ENCODE measurements at regions of chr1 and their contacts with region 1.

Region 1: DNA sequence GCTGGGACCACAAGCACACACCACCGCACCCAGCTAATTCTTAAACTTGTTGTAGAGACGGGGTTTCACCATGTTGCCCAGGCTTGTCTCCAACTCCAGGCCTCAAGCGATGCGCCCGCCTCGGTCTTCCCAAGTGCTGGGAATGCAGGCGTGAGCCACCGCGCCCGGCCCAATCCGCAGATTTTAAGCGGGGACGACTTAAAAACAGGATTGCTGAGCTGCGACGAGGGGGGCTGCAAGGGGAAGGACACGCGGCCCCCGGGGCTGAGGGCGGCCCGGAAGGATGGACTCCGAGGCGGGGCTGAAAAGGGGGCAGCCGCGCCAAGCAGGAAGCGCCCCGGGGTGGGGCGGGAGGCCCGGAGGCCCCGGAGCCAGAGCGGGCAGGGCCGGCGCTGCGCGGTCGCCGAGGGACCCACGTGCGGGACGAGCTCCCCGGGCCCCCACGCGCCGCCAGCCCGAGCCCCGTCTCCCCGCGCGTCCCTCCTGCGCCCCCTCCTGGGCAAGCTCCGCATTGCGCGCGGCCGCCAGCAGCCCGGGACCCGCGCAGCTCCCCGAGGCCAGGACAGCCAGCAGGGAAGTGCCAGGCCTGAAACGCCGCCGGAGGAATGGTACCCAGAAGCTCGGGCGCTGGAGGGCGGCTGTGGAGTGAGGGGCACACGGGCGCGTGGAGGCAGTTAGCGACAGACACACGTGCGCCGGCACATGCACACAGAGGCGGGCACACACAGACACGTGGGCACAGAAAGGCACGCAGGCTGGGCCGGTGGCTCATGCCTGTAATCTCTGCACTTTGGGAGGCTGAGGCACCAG is 5.5 kb upstream of the PRKCZ start:
- DNase-seq: peak; percentile 80
- ATAC-seq: peak; percentile 9
- H3K4me3 Mint-ChIP-seq: peak overlapping the region; percentile 27
- H3K27ac Mint-ChIP-seq: no peak overlapping the region
- H3K4me1 Mint-ChIP-seq: peaks cover 23% of the 10 kb centered on the region
- H3K27me3 Mint-ChIP-seq: peaks cover 13% of the 10 kb centered on the region; the same call in 1 of the 2 replicates
- CTCF ChIP-seq: peak; percentile 94

Region 2: GRCh38 chr1:1906185-1907097 is 138.3 kb before region 1 on chr1:
- CTCF ChIA-PET with region 1: interaction called, 53 read pairs
- POLR2A ChIA-PET with region 1: no interaction called
- DNase-seq: peak; percentile 89
- ATAC-seq: peak; percentile 68
- H3K4me3 Mint-ChIP-seq: peak overlapping the region; percentile 42; the same call in 1 of the 2 replicates
- H3K27ac Mint-ChIP-seq: peak overlapping the region; percentile 84; the same call in 1 of the 2 replicates
- H3K4me1 Mint-ChIP-seq: peaks cover 19% of the 10 kb centered on the region
- H3K27me3 Mint-ChIP-seq: no peaks in the 10 kb centered on the region; the same call in 1 of the 2 replicates
- CTCF ChIP-seq: peak; percentile 63

Region 3: GRCh38 chr1:1959840-1960479 is 84.8 kb before region 1 on chr1:
- CTCF ChIA-PET with region 1: interaction called, 312 read pairs
- POLR2A ChIA-PET with region 1: interaction called, 11 read pairs
- DNase-seq: peak; percentile 96
- ATAC-seq: peak; percentile 89
- H3K4me3 Mint-ChIP-seq: peak overlapping the region; percentile 49
- H3K27ac Mint-ChIP-seq: no peak overlapping the region; the same call in 1 of the 2 replicates
- H3K4me1 Mint-ChIP-seq: peaks cover 20% of the 10 kb centered on the region
- H3K27me3 Mint-ChIP-seq: no peaks in the 10 kb centered on the region; the same call in none of the 2 replicates
- CTCF ChIP-seq: peak; percentile 90

Region 4: GRCh38 chr1:2003278-2004131 is 41.2 kb before region 1 on chr1 and contains the start of gene CFAP74:
- CTCF ChIA-PET with region 1: interaction called, 16 read pairs
- POLR2A ChIA-PET with region 1: no interaction called
- DNase-seq: peak; percentile 89
- ATAC-seq: peak; percentile 91
- H3K4me3 Mint-ChIP-seq: peak within 1 kb of the TSS; percentile 60
- H3K27ac Mint-ChIP-seq: no peak within 1 kb of the TSS
- H3K4me1 Mint-ChIP-seq: no peaks in the 10 kb centered on the region
- H3K27me3 Mint-ChIP-seq: no peaks in the 10 kb centered on the region; the same call in 1 of the 2 replicates
- CTCF ChIP-seq: no peak
- total RNA-seq, gene CFAP74: 0.34 to 0.39 TPM (median 0.35 TPM) in 3 replicates

Region 5: GRCh38 chr1:2031546-2032540 is 12.9 kb before region 1 on chr1:
- CTCF ChIA-PET with region 1: interaction called, 56 read pairs
- POLR2A ChIA-PET with region 1: interaction called, 3 read pairs
- DNase-seq: no peak
- ATAC-seq: peak; percentile 22
- H3K4me3 Mint-ChIP-seq: no peak overlapping the region
- H3K27ac Mint-ChIP-seq: no peak overlapping the region
- H3K4me1 Mint-ChIP-seq: no peaks in the 10 kb centered on the region
- H3K27me3 Mint-ChIP-seq: no peaks in the 10 kb centered on the region
- CTCF ChIP-seq: no peak

Region 6: GRCh38 chr1:2279210-2279639 is 234.5 kb after region 1 on chr1:
- CTCF ChIA-PET with region 1: no interaction called
- POLR2A ChIA-PET with region 1: no interaction called
- DNase-seq: peak; percentile 89
- ATAC-seq: peak; percentile 94
- H3K4me3 Mint-ChIP-seq: peak overlapping the region; percentile 50
- H3K27ac Mint-ChIP-seq: peak overlapping the region; percentile 97
- H3K4me1 Mint-ChIP-seq: peaks cover 50% of the 10 kb centered on the region
- H3K27me3 Mint-ChIP-seq: no peaks in the 10 kb centered on the region
- CTCF ChIP-seq: no peak

Region 7: DNA sequence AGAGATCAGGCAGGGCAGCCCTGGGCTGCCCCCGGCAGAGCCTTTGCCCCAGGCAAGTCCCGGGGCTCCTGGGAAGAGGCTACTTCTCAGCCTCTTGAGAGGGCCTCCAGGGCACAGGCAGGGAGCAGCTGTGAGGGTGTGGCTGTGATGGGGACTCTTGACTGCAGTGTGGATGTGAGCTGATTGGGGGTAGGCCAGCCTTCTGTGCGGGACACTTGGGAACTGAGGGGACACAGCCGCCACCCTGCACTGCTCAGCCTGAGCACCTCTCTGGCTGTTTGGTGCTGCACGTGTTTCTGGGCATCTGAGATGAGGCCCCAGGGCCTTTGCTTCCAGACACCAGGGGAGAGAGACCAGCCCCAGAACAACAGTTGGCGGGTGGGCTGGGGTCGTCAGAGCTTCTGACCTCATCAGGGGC is 245.5 kb after region 1 on chr1:
- CTCF ChIA-PET with region 1: no interaction called
- POLR2A ChIA-PET with region 1: no interaction called
- DNase-seq: no peak
- ATAC-seq: no peak
- H3K4me3 Mint-ChIP-seq: no peak overlapping the region
- H3K27ac Mint-ChIP-seq: peak overlapping the region; percentile 95
- H3K4me1 Mint-ChIP-seq: peaks cover 47% of the 10 kb centered on the region
- H3K27me3 Mint-ChIP-seq: no peaks in the 10 kb centered on the region
- CTCF ChIP-seq: no peak